ENCODE measurements at regions of chr16 and their contacts with region 1.

Region 1: DNA sequence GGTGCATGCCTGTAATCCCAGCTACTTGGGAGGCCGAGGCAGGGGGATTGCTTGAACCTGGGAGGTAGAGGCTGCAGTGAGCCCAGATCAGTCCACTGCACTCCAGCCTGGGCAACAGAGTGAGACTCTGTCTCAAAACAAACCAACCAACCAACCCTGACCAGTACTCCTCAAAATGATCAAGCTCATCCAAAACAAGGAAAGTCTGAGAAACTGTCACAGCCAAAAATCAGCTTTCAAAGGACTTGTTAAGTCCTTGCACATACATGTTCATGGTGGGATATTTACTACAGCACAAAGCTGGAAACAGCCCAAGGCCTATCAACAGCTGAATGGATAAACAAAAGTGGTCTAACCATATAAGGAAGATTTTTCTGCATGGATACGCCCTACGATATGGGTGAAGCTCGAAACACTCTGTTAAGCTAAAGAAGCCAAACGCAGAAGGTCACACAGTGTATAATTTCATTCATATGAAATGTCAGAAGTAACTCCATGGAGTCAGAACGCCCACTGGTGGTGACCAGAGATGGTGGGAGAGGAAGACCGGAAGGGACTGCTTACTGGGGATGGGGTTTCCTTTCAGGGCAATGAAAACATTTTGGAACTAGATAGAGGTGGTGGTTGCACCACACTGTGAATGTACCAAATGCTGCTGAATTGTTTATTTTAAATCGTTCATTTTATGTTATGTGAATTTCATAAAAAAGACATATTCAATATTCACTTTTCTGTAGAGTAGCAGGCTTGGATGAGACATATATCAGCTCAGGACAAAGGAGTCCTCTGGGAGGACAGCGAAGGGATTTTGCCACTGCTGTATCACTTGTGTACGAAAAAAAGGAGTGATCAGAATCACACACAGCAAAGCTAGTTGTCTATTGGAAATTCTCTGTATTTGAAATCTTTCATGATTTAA is 17.7 kb downstream of the CCL17 start:
- DNase-seq: peak in 1 of 3 donors; percentile 19
- H3K4me3 ChIP-seq: no peak overlapping the region
- H3K27ac ChIP-seq: no peak overlapping the region
- H3K4me1 ChIP-seq: peaks cover 0 to 14% (median 12%) of the 10 kb centered on the region in 4 experiments
- H3K27me3 ChIP-seq: no peaks in the 10 kb centered on the region

Region 2: GRCh38 chr16:57300387-57301125 is 121.7 kb before region 1 on chr16:
- CTCF ChIA-PET with region 1: interaction called, 250 read pairs
- POLR2A ChIA-PET with region 1: interaction called, 8 read pairs
- DNase-seq: peak; percentile 99 to 100 (median 99)
- H3K4me3 ChIP-seq: peak overlapping the region in 6 of 7 experiments; percentile 72 to 85 (median 80)
- H3K27ac ChIP-seq: peak overlapping the region in 1 of 2 experiments; percentile 81
- H3K4me1 ChIP-seq: peaks cover 3 to 20% (median 16%) of the 10 kb centered on the region in 4 experiments
- H3K27me3 ChIP-seq: peaks cover 0 to 6% (median 0%) of the 10 kb centered on the region in 5 experiments

Region 3: GRCh38 chr16:57403965-57404817 is 18.1 kb before region 1 on chr16 and contains the start of gene CCL17:
- CTCF ChIA-PET with region 1: interaction called, 19 read pairs
- POLR2A ChIA-PET with region 1: no interaction called
- DNase-seq: peak in 1 of 3 donors; percentile 21
- H3K4me3 ChIP-seq: no peak within 1 kb of the TSS
- H3K27ac ChIP-seq: no peak within 1 kb of the TSS
- H3K4me1 ChIP-seq: peaks cover 0 to 8% (median 3%) of the 10 kb centered on the region in 4 experiments
- H3K27me3 ChIP-seq: peaks cover 0 to 4% (median 2%) of the 10 kb centered on the region in 5 experiments

Region 4: GRCh38 chr16:57432989-57433388 is 10.7 kb after region 1 on chr16:
- CTCF ChIA-PET with region 1: interaction called, 10 read pairs
- POLR2A ChIA-PET with region 1: no interaction called
- DNase-seq: no peak
- H3K4me3 ChIP-seq: no peak overlapping the region
- H3K27ac ChIP-seq: no peak overlapping the region
- H3K4me1 ChIP-seq: no peaks in the 10 kb centered on the region
- H3K27me3 ChIP-seq: no peaks in the 10 kb centered on the region

Region 5: DNA sequence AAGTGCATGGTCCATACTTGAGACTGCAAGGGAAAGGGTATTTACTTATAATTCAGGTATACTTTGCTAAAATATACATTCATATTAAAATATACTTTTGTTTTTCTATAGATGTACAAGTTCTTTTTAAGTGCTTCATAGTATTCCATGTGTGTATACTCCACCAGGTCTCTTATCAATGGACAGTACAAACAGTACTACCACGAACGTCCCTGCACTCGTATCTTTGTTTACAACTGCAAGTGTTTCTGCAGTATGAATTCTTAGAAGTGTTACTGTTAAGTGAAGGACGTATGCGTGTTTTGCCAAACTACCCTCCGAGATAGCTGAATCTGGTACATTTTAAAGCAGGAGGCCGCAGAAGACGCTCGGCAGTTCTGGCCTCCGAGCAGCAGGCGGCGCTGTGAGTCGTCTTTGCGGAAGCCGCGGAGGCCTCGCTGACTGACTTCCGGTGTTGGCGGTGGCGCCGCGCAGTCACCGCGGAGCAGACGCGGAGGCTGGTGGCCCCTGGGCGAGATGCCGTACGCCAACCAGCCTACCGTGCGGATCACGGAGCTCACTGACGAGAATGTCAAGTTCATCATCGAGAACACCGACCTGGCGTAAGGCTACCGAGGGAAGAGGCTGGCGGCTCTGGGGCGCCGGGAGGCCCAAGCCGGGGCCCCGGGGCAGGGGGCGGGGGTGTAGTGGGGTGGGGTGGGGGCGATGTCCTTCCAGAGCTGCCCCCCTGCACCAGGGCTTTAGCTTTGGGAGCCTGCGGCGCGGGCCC is 40.1 kb after region 1 on chr16 and contains the start of gene POLR2C:
- CTCF ChIA-PET with region 1: interaction called, 11 read pairs
- POLR2A ChIA-PET with region 1: no interaction called
- DNase-seq: peak; percentile 93 to 96 (median 96)
- H3K4me3 ChIP-seq: peak within 1 kb of the TSS; percentile 48 to 94 (median 83)
- H3K27ac ChIP-seq: peak within 1 kb of the TSS; percentile 35 to 81
- H3K4me1 ChIP-seq: peaks cover 3 to 11% (median 10%) of the 10 kb centered on the region in 4 experiments
- H3K27me3 ChIP-seq: no peaks in the 10 kb centered on the region

Region 6: DNA sequence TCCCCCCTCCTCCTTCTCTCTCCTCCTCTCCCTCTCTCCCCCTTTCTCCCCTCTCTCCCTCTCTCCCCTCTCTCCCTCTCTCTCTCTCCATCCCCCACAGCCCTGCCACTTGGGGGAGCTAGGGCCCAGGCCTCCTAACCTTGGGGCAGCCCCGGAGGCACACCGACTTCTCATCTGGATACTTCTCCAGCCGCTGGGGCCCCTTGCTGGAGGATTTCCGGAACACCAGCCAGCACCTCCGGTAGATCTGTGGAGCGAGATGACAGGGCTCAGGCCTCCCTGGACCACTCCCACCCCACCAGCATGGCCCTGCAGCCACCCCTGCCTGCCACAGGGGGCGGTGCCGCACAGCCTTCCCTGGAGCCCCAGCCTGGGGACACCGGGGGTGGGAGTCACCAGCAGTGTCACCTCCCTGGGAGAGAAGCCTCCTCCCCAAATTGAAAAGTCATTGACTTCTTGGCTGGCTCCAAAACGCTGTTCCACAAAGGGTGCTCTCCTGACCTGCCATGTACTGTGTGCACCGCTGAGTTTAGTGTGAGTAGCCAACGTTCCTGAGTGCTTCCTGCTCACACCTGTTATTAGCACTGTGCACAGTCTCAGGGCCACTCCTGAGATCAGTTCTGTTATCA is 53.5 kb after region 1 on chr16:
- CTCF ChIA-PET with region 1: no interaction called
- POLR2A ChIA-PET with region 1: no interaction called
- DNase-seq: peak; percentile 96 to 99 (median 98)
- H3K4me3 ChIP-seq: peak overlapping the region in 2 of 7 experiments; percentile 20 to 49
- H3K27ac ChIP-seq: no peak overlapping the region
- H3K4me1 ChIP-seq: peaks cover 0 to 77% (median 75%) of the 10 kb centered on the region in 4 experiments
- H3K27me3 ChIP-seq: no peaks in the 10 kb centered on the region